Adrenal gland (tissue), 19 donors: ENCODE measurements at regions of chr12 and their contacts with region 1.

Region 1: GRCh38 chr12:56803750-56804149 is 40.6 kb downstream of the HSD17B6 start:
- DNase-seq: peak; percentile 22 to 57 (median 42)
- H3K4me3 ChIP-seq: no peak overlapping the region
- H3K27ac ChIP-seq: no peak overlapping the region
- H3K4me1 ChIP-seq: peaks cover 0 to 8% of the 10 kb centered on the region in 2 donors
- H3K27me3 ChIP-seq: no peaks in the 10 kb centered on the region
- CTCF ChIP-seq: no peak
- POLR2A ChIP-seq: no peak

Region 2: DNA sequence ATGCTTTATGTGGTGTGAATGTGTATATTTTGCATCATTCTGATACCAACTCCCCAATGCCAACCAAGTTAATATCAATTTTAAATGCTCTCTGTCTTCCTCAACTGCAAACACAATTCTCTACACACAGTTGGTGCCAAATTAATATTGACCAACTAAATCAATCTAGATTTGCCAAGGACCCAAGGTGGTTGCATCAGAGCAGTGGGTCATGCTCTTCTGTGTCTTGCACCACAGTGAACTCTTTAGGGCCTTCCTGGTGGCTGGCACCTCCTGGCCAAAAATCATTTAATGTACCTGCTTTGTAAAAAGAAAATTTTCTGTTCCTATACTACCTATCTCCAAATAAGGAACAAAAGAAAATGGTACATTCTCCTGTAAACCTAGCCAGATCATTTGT is 522.9 kb before region 1 on chr12:
- intact Hi-C with region 1: no loop called
- DNase-seq: peak in 1 of 7 donors; percentile 56
- H3K4me3 ChIP-seq: no peak overlapping the region
- H3K27ac ChIP-seq: no peak overlapping the region
- H3K4me1 ChIP-seq: peaks cover 0 to 2% of the 10 kb centered on the region in 2 donors
- H3K27me3 ChIP-seq: no peaks in the 10 kb centered on the region
- CTCF ChIP-seq: no peak
- POLR2A ChIP-seq: no peak

Region 3: GRCh38 chr12:56897844-56898361 is 94.2 kb after region 1 on chr12:
- intact Hi-C with region 1: loop called in 1 of 2 experiments (anchors 10 kb)
- DNase-seq: no peak
- H3K4me3 ChIP-seq: no peak overlapping the region
- H3K27ac ChIP-seq: no peak overlapping the region
- H3K4me1 ChIP-seq: peaks cover 0 to 8% of the 10 kb centered on the region in 2 donors
- H3K27me3 ChIP-seq: no peaks in the 10 kb centered on the region
- CTCF ChIP-seq: no peak
- POLR2A ChIP-seq: no peak